Heart left ventricle (tissue), 16 donors: ENCODE measurements at regions of chr6 and their contacts with region 1.

Region 1: GRCh38 chr6:56459025-56459810 is 183.5 kb downstream of the DST start:
- DNase-seq: no peak
- ATAC-seq: peak in 1 of 4 donors; percentile 8
- H3K4me3 ChIP-seq: no peak overlapping the region
- H3K27ac ChIP-seq: no peak overlapping the region
- H3K4me1 ChIP-seq: no peaks in the 10 kb centered on the region
- H3K27me3 ChIP-seq: no peaks in the 10 kb centered on the region
- CTCF ChIP-seq: no peak
- POLR2A ChIP-seq: no peak

Region 2: DNA sequence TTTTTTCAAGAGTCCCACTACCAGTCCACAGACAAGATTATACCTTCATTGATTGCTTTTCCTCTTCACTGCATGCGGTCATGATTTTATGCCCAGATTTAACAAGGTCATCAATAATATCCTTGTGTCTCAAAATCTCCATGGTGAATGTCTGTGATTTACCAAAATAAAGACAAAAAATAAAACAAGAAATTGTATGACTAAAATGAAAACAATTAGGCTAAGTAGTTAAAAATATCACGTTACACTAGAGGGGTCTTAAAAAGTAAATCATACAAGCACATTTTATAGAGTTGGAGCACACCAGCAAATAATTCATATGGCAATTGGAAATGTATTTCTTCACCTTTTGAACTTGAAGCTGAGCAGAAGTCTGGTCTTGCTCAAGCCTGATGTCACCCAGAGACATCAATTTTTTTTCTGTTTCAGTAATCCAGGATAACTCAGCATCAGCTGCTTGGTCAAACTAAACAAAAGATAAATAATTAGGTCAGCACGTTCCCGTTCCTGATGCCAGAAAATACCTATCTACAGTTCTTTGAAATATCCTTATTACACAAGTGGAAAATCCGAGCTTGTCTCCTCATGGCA is 58.0 kb after region 1 on chr6:
- intact Hi-C with region 1: no loop called
- DNase-seq: no peak
- ATAC-seq: peak in 3 of 4 donors; percentile 33 to 52 (median 36)
- H3K4me3 ChIP-seq: no peak overlapping the region
- H3K27ac ChIP-seq: peak overlapping the region in 8 of 12 donors; percentile 3 to 74 (median 30)
- H3K4me1 ChIP-seq: peaks cover 0 to 57% (median 29%) of the 10 kb centered on the region in 12 donors
- H3K27me3 ChIP-seq: no peaks in the 10 kb centered on the region
- CTCF ChIP-seq: no peak
- POLR2A ChIP-seq: no peak

Region 3: GRCh38 chr6:56595490-56596122 is 136.4 kb after region 1 on chr6:
- intact Hi-C with region 1: loop called in 1 of 10 experiments (anchors 10 kb)
- DNase-seq: peak in 1 of 5 donors; percentile 44
- ATAC-seq: peak; percentile 35 to 75 (median 66)
- H3K4me3 ChIP-seq: no peak overlapping the region
- H3K27ac ChIP-seq: peak overlapping the region in 1 of 12 donors; percentile 50
- H3K4me1 ChIP-seq: peaks cover 0 to 28% (median 0%) of the 10 kb centered on the region in 12 donors
- H3K27me3 ChIP-seq: no peaks in the 10 kb centered on the region
- CTCF ChIP-seq: peak; percentile 49 to 71 (median 59)
- POLR2A ChIP-seq: no peak